ENCODE measurements at regions of chr19 and their contacts with region 1.

Region 1: DNA sequence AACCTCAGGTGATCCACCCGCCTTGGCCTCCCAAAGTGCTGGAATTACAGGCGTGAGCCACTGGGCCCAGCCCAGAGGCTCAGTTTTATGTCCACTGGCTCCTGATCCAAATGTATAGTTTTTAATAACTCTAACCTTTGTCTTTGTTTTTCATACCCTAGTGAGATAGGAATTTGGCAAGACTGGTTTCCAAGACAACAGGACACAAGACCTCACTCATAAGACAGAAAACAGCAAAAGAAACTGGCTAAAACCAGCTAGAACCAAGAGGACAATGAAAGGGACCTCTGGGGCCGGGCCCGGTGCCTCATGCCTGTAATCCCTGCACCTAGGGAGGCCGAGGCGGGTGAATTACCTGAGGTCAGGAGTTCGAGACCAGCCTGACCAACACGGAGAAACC is 27.6 kb downstream of the CPT1C start:
- DNase-seq: no peak
- H3K4me3 ChIP-seq: no peak overlapping the region
- H3K27ac ChIP-seq: no peak overlapping the region
- H3K4me1 ChIP-seq: no peaks in the 10 kb centered on the region
- H3K27me3 ChIP-seq: no peaks in the 10 kb centered on the region
- CTCF ChIP-seq: no peak
- EP300 ChIP-seq: no peak
- POLR2A ChIP-seq: no peak
- RAD21 ChIP-seq: no peak

Region 2: DNA sequence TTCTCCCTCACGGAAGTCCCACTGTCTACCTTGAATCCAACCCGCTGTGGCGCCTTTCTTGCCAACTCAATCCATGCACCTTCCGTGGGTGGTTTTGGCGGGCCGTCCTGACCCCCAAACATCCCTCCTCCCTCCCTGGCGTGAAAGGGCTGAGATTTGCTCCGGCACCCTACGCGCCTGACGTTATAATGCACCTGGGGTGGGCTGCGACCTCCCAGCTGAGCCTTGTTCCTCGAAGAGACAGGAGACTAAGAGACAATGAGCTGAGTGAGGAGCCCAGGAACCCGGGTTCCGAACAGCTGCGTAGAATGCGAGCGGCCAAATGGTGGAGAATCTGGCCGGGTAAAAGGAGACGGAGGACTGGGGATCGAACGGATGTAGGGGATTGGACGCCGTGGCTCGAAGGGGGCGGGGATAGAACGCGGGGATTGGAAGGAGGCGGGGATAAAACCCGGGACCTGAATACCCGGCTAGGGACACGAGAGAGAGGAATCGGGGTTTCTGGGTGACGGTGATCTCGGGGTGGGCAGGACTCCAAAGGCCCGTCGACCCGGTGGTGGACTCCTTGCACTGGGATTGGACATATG is 27.8 kb before region 1 on chr19 and contains the start of gene CPT1C:
- CTCF ChIA-PET with region 1: interaction called, 11 read pairs
- POLR2A ChIA-PET with region 1: interaction called, 51 read pairs
- DNase-seq: peak; percentile 73 to 94
- H3K4me3 ChIP-seq: peak within 1 kb of the TSS; percentile 88 to 94 (median 92)
- H3K27ac ChIP-seq: peak within 1 kb of the TSS; percentile 57; the same call in 1 of the 2 replicates
- H3K4me1 ChIP-seq: peaks cover 0 to 25% (median 13%) of the 10 kb centered on the region in 4 experiments; a peak in 6 of 7 replicates
- H3K27me3 ChIP-seq: no peaks in the 10 kb centered on the region
- CTCF ChIP-seq: 0 out of 4 replicates have a peak, but pooled peaks of 1 of the 3 experiments have one; percentile 9
- EP300 ChIP-seq: no peak
- POLR2A ChIP-seq: peak; percentile 81; a peak in 2 of 3 replicates
- RAD21 ChIP-seq: no peak
- total RNA-seq, gene CPT1C: 91.8 and 98.3 TPM in 2 replicates

Region 3: GRCh38 chr19:49700563-49700962 is 17.9 kb before region 1 on chr19:
- CTCF ChIA-PET with region 1: interaction called, 13 read pairs
- POLR2A ChIA-PET with region 1: interaction called, 14 read pairs
- DNase-seq: no peak
- H3K4me3 ChIP-seq: no peak overlapping the region
- H3K27ac ChIP-seq: no peak overlapping the region
- H3K4me1 ChIP-seq: no peaks in the 10 kb centered on the region
- H3K27me3 ChIP-seq: no peaks in the 10 kb centered on the region
- CTCF ChIP-seq: no peak
- EP300 ChIP-seq: no peak
- POLR2A ChIP-seq: no peak
- RAD21 ChIP-seq: no peak

Region 4: GRCh38 chr19:49741210-49741844 is 22.8 kb after region 1 on chr19:
- CTCF ChIA-PET with region 1: interaction called, 18 read pairs
- POLR2A ChIA-PET with region 1: interaction called, 4 read pairs
- DNase-seq: no peak
- H3K4me3 ChIP-seq: no peak overlapping the region
- H3K27ac ChIP-seq: no peak overlapping the region
- H3K4me1 ChIP-seq: no peaks in the 10 kb centered on the region; a peak in 2 of 7 replicates
- H3K27me3 ChIP-seq: no peaks in the 10 kb centered on the region
- CTCF ChIP-seq: no peak
- EP300 ChIP-seq: no peak
- POLR2A ChIP-seq: no peak
- RAD21 ChIP-seq: no peak

Region 5: GRCh38 chr19:49749055-49749716 is 30.7 kb after region 1 on chr19:
- CTCF ChIA-PET with region 1: interaction called, 18 read pairs
- POLR2A ChIA-PET with region 1: no interaction called
- DNase-seq: no peak
- H3K4me3 ChIP-seq: no peak overlapping the region
- H3K27ac ChIP-seq: no peak overlapping the region
- H3K4me1 ChIP-seq: no peaks in the 10 kb centered on the region; a peak in 1 of 7 replicates
- H3K27me3 ChIP-seq: no peaks in the 10 kb centered on the region
- CTCF ChIP-seq: no peak
- EP300 ChIP-seq: no peak
- POLR2A ChIP-seq: no peak
- RAD21 ChIP-seq: no peak

Region 6: GRCh38 chr19:49773669-49774350 is 55.3 kb after region 1 on chr19:
- CTCF ChIA-PET with region 1: interaction called, 17 read pairs
- POLR2A ChIA-PET with region 1: no interaction called
- DNase-seq: no peak
- H3K4me3 ChIP-seq: no peak overlapping the region
- H3K27ac ChIP-seq: 0 out of 2 replicates have a peak overlapping the region, but pooled peaks have one; percentile 36
- H3K4me1 ChIP-seq: no peaks in the 10 kb centered on the region
- H3K27me3 ChIP-seq: no peaks in the 10 kb centered on the region
- CTCF ChIP-seq: no peak
- EP300 ChIP-seq: no peak
- POLR2A ChIP-seq: no peak
- RAD21 ChIP-seq: no peak